ENCODE measurements at regions of chr16 and their contacts with region 1.

Region 1: GRCh38 chr16:30005341-30006094 is 5.3 kb downstream of the DOC2A start:
- DNase-seq: no peak
- ATAC-seq: peak; percentile 66

Region 2: DNA sequence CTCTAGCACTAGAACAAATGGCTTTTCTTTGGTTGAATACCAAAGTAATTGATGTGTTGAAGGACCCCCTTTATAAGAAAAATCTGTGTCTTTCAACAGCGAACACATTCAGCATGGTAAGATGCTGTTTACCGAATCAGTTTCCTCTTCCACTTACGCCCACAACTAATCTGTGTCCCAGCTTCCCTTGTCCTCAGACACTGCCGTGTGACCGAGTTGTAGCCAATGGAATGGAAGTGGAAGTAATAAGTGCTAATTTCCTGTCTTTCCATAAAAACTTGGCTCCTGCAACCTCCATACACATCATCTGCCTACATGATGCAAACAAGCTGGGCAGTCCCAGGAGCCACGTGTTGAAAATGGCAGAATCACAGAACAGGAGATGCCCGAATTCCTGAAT is 152.9 kb before region 1 on chr16:
- intact Hi-C with region 1: loop called (anchors 10 kb)
- DNase-seq: no peak
- ATAC-seq: no peak

Region 3: GRCh38 chr16:29926005-29926710 is 79.4 kb before region 1 on chr16 and contains the start of gene KCTD13:
- intact Hi-C with region 1: loop called (anchors 10 kb)
- DNase-seq: peak; percentile 91
- ATAC-seq: peak; percentile 99
- total RNA-seq, gene KCTD13: 30.4 TPM